ENCODE measurements at regions of chr18 and their contacts with region 1.

Region 1: DNA sequence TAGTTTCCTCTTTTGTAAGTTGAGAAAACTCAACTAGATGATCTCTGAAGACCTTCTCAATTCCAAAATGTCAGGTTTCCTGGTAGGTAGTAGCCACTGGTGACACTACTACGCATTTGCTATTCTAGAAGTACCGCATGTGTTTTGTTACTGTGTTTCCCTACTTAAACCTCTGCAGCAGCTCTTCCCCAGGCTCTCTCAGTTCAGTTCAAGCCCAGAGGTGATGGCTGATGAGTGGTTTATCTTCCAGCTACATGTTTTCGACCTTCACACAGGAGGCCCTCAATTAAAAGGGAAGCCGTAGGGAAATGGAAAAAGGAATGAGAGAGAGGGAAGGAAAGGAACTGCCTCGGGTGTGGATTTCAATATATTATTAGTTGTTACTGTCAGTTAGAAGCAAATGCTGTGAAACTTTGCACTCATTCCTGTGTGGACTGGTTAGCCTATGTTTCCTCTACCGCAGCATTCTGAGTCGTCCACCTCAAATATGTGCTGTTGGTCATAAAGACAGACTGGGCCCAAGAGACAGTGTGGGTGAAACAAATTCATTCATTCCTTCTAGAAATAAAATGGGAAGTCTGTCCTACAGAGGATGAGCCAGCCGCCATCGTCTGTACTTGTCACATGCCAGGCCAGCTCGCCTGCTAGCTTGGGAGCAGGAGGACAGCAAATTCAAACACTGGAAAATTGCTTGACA is 455.2 kb upstream of the RAB12 start:
- DNase-seq: no peak
- H3K4me3 ChIP-seq: no peak overlapping the region
- H3K27ac ChIP-seq: no peak overlapping the region
- H3K4me1 ChIP-seq: no peaks in the 10 kb centered on the region
- H3K27me3 ChIP-seq: no peaks in the 10 kb centered on the region
- CTCF ChIP-seq: no peak

Region 2: GRCh38 chr18:7741640-7742039 is 412.4 kb before region 1 on chr18:
- CTCF ChIA-PET with region 1: no interaction called
- POLR2A ChIA-PET with region 1: no interaction called
- intact Hi-C with region 1: loop called (anchors 2 kb)
- DNase-seq: no peak
- H3K4me3 ChIP-seq: no peak overlapping the region
- H3K27ac ChIP-seq: no peak overlapping the region
- H3K4me1 ChIP-seq: no peaks in the 10 kb centered on the region
- H3K27me3 ChIP-seq: no peaks in the 10 kb centered on the region
- CTCF ChIP-seq: no peak

Region 3: GRCh38 chr18:8097927-8098326 is 56.1 kb before region 1 on chr18:
- CTCF ChIA-PET with region 1: no interaction called
- POLR2A ChIA-PET with region 1: no interaction called
- intact Hi-C with region 1: no loop called
- DNase-seq: no peak
- H3K4me3 ChIP-seq: no peak overlapping the region
- H3K27ac ChIP-seq: no peak overlapping the region
- H3K4me1 ChIP-seq: no peaks in the 10 kb centered on the region
- H3K27me3 ChIP-seq: no peaks in the 10 kb centered on the region
- CTCF ChIP-seq: no peak